BJ (cell line): ENCODE measurements at regions of chr9 and their contacts with region 1.

Region 1: DNA sequence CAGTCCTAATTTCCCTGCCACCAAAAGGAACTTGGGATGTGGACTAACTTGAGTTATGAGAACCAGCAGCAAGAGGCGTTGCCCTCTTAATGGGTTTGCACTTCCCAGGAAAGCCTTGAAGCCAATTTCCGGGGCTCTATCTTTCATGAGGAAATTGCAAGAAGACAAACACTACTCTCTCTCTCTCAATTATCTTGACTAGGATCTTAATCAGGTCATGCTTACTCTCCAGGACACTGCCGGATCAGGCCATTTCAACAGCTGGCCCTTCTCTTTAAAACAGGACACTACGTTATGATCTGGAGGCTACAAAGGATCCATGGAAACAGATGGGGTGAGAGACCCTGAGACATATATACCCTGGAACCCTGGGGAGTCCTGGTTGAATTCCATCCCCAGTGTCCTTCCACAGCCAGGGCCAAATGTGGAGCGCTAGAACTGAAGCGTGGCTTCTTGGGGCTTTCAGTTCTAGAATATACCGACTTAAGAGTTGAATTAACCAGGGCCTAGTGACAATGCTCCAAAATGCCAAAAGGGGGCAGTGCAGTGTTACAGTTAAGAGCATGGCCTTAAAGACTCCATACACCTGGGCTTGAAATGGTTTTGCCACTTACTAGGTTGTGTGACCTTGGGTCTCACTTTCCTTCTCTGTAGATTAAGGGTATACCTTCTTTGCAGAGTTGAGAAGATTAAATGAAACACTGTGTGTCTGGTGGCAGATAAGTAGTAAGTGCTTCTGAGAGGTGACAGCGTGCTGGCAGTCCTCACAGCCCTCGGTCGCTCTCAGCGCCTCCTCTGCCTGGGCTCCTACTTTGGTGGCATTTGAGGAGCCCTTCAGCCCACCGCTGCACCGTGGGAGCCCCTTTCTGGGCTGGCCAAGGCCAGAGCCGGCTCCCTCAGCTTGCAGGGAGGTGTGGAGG is 21.1 kb downstream of the FAM219A start:
- DNase-seq: no peak
- H3K4me3 ChIP-seq: no peak overlapping the region
- H3K27me3 ChIP-seq: no peaks in the 10 kb centered on the region
- CTCF ChIP-seq: peak; percentile 71

Region 2: GRCh38 chr9:34458013-34458958 is 21.0 kb after region 1 on chr9 and contains the starts of genes DNAI1 and FAM219A:
- CTCF ChIA-PET with region 1: interaction called, 14 read pairs
- POLR2A ChIA-PET with region 1: no interaction called
- DNase-seq: peak; percentile 86
- H3K4me3 ChIP-seq: peak within 1 kb of the TSS; percentile 88
- H3K27me3 ChIP-seq: peaks cover 5% of the 10 kb centered on the region
- CTCF ChIP-seq: no peak
- polyA plus RNA-seq, gene DNAI1: not detected in 2 replicates
- polyA plus RNA-seq, gene FAM219A: 10.7 and 17.8 TPM in 2 replicates